ENCODE measurements at regions of chr13 and their contacts with region 1.

Region 1: DNA sequence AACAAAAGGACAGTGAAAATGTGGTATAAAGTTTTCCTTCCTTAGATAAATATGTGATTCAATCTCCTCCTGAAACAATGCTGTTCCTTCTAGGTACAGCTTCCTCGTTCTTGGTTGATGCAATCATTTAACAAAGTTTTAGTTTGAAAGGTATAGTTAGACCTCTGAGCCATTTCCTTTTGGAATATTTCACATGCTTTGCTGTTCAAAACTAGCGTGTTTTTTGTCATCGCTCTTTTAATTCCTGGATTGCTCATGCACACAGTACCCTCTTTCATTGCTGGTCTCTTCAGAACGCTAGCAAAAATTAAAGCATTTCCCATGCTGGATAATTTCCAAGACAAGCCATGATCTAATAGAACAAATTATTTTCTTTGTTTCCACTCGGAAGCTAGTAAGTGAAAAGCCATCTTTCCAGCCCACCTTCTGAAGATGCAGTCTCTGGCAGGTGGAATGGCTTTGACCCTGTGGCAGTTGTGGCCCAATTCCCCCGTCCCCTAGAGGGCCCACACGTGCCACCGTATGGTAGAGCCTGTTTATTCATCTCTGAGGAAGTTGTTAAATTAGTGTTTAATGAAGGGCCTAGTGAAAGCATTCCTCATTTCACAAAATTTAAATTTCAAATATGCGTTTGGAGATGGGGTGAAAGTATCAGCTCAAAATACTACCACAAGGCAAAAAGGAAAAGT is 1040.6 kb upstream of the SLC10A2 start:
- DNase-seq: peak; percentile 27 to 74
- H3K4me3 ChIP-seq: no peak overlapping the region
- H3K27ac ChIP-seq: peak overlapping the region; percentile 71
- H3K4me1 ChIP-seq: peaks cover 14% of the 10 kb centered on the region
- H3K27me3 ChIP-seq: no peaks in the 10 kb centered on the region
- CTCF ChIP-seq: no peak

Region 2: DNA sequence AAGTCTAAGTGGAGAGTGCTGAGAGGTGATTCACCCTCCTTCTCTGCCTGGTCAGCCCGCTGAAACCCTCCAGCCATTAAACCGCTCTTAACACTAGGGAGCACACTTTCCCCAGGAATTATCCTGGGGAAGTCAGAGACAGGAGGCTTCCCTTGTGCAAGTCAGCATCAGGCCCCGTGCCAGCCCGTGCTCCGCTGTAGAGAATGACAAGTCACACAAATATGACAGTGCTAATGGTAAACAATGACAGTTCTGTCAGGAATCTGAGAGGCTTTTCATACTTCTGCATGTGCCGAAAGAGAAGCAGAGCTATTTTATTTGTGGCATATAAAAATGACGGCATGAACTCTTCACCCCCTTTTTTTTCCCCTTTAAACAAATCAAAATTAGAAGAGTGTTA is 223.7 kb before region 1 on chr13:
- CTCF ChIA-PET with region 1: no interaction called
- POLR2A ChIA-PET with region 1: no interaction called
- intact Hi-C with region 1: loop called (anchors 2 kb)
- DNase-seq: peak; percentile 91 to 98
- H3K4me3 ChIP-seq: no peak overlapping the region
- H3K27ac ChIP-seq: 0 out of 2 replicates have a peak overlapping the region, but pooled peaks have one; percentile 29
- H3K4me1 ChIP-seq: peaks cover 7% of the 10 kb centered on the region
- H3K27me3 ChIP-seq: no peaks in the 10 kb centered on the region
- CTCF ChIP-seq: peak; percentile 77

Region 3: DNA sequence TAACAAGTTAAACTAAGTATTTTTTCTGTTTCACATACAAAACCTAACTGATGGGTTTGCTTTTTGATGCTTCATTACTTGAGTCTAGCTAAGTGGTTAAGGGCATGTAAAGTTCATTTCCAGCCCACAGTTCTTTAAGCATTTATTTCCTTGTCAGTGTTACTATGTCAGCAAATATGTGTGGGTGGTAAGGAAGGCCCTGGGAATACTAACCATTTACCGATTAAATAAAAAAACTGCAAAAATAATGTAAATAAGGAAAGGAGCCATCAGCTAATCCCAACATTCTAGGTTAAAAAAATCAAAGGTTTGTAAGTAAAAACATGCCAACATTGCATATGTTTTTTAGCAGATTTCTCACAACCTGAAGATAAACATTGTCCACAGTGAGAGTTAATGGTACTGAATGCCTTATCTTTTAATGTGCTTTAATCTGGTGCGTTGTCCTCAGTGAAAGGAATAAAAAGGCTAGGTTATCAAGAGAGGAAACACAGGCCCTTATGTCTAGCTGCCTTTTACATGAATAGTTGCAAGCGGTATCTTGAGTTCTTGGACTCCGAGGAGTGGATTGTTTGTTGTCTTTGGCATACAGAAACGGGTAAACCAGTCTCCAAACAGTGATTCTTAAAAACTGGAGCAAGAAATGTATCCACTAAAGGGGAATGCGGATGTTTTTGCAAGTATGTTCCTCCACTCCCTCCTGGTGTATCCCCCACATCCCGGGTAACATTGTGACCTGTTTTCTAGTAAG is 91.0 kb before region 1 on chr13:
- CTCF ChIA-PET with region 1: no interaction called
- POLR2A ChIA-PET with region 1: interaction called, 11 read pairs
- intact Hi-C with region 1: no loop called
- DNase-seq: no peak
- H3K4me3 ChIP-seq: no peak overlapping the region
- H3K27ac ChIP-seq: no peak overlapping the region
- H3K4me1 ChIP-seq: no peaks in the 10 kb centered on the region
- H3K27me3 ChIP-seq: no peaks in the 10 kb centered on the region
- CTCF ChIP-seq: no peak

Region 4: DNA sequence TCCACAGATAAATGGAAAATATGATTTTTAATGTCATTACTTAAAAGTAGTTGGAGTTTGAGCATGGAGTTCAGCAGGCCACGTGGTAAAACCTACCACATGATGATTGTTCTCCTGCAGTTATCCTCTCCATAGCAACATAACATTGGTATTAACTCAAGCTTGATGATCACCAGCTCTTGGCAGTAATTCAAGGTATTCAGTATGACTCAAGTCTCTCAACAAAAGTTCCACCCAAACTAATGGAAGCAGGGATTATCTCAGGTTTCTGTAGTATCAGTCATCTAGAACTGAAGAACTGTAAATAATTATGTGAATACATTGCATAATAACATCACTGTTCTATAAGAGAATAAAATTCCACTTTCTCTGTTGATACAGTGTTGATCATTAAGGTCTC is 1336.1 kb after region 1 on chr13:
- CTCF ChIA-PET with region 1: no interaction called
- POLR2A ChIA-PET with region 1: no interaction called
- intact Hi-C with region 1: loop called (anchors 5 kb)
- DNase-seq: peak; percentile 28 to 98
- H3K4me3 ChIP-seq: no peak overlapping the region
- H3K27ac ChIP-seq: peak overlapping the region; percentile 68
- H3K4me1 ChIP-seq: peaks cover 16% of the 10 kb centered on the region
- H3K27me3 ChIP-seq: no peaks in the 10 kb centered on the region
- CTCF ChIP-seq: no peak